ENCODE measurements at regions of chr18 and their contacts with region 1.

Region 1: DNA sequence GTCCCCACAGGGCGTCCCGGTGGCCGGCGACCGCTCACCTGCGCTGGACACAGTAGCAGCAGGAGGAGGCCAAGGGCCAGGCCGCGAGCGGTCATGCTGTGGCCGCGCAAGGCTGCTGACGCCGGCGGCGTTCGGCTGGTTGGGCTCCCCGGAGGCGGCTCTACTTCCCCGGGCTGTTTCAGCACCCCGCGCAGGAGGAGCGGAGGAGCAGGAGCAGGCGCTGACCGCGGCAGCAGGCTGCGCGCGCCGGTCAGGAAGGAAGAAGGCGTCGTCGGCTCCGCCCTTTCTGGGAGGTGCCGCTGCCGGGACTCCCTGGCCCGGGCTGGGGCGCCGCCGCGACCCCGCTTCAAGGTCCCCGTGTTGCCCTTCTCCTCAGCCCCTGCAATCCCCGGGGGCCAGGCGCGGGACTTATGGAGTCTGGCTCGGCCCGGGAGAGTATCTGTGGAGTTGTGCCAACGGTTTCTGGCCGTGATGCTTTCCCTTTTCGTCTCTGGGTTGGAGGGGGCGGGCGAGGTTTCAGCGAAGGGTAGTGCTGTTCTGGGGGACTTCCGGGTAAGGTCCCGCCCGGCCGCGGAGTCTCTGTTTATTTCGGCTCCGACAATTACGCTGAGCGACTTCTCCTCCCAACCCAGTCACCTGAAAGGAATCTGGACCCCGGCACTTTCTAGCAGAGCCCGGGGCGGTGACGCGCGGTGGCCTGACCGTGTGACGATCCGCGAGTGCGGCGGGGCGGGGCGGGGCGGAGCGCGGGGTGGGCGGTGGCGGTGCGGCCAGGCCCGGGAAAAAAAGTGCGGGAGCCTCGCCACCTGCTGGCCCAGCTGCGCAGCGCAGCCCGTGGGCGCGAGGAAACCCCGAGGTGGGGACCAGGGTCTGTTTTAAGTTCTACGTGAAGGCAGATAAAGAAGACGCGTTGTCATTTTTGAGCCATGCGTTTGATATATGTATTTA is at the start of gene NPC1:
- DNase-seq: peak; percentile 87 to 99 (median 90)

Region 2: DNA sequence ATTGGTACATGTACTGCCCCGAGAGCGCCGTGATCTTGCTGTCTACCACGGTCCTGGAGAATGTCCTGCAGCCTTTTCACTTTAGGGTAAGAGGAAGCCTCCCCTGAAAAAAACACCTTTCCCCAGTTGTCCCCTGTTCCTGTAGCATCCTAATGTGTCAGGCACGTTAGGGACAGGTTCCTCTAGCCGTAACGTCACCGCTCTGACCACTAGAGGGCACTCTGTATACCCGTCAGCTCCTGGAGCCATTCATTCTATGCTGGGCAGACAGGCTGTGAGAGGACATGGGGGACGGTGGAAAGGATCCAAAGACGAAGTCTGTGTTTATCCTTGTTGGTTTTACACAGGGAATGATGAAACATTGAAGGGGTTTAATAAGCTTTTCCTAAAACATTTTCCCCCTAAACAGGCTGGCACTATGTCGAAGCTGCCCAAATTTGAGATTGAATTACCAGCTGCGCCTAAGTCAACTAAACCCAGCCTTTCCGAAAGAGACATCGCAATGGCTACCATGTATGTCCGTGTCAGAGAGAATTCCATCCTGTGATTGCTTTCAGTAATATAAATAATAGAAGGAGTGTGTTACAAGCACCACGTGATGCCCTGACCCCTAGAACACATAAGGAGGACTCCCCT is 70.5 kb before region 1 on chr18:
- intact Hi-C with region 1: loop called (anchors 1 kb)
- DNase-seq: peak; percentile 65 to 97 (median 84)